Activated T-helper 1 cell treated with anti-CD3 and anti-CD28 coated beads, Interleukin-12 subunit alpha, Interleukin-12 subunit beta, Interleukin-2, Interleukin-4 antibody, amounts not matched to agents 30 ng/mL and 10 ng/mL and 1 ng/mL, durations not matched to agents 14 hours and 24 hours and 36 hours (primary cell): ENCODE measurements at regions of chr19 and their contacts with region 1.

Region 1: DNA sequence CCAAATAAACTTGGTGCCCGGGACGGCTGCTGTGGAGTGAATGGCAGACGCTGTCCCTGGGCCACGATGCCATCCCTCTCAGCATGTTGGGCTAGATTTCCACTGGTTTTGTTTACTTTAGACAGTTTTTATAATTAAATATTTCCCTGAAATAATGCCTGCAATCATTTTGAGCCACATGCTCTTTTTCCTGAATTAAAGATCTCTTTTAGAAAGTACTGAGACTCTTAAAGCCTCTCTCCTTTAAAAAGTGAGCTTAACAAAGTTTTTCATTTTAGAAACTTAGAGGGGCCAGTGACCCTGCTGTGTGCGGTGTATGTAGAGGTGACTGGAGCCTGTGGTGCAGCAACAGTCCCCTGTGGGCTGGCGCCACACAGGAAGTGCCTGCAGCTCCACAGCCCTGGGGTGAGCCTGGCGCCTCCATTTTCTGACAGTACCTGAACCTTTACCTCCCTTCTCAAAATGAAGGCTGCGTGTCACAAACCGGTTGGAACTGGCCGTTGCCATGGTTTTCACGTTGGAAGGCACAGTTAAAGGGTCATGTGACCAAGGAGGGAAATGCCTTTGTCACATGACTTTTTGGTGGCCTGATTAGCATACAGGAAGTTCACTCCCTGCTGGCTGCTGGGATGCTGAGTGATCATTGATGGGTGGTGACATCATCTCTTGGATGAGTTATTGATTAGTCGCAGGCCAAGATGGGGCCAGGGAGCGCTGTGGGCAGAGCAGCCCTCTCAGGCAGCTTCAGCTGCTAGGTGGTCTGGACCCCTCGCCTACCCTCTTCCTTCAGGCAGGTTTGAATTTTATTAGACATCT is 26.3 kb downstream of the TSSK6 start:
- DNase-seq: peak; percentile 91
- H3K4me3 Mint-ChIP-seq: peak overlapping the region; percentile 72
- H3K27ac Mint-ChIP-seq: peak overlapping the region; percentile 99
- H3K4me1 Mint-ChIP-seq: peaks cover 34% of the 10 kb centered on the region
- H3K27me3 Mint-ChIP-seq: no peaks in the 10 kb centered on the region

Region 2: GRCh38 chr19:19026299-19026971 is 462.6 kb before region 1 on chr19:
- intact Hi-C with region 1: no loop called
- DNase-seq: no peak
- H3K4me3 Mint-ChIP-seq: no peak overlapping the region
- H3K27ac Mint-ChIP-seq: no peak overlapping the region
- H3K4me1 Mint-ChIP-seq: peaks cover 35% of the 10 kb centered on the region
- H3K27me3 Mint-ChIP-seq: no peaks in the 10 kb centered on the region

Region 3: DNA sequence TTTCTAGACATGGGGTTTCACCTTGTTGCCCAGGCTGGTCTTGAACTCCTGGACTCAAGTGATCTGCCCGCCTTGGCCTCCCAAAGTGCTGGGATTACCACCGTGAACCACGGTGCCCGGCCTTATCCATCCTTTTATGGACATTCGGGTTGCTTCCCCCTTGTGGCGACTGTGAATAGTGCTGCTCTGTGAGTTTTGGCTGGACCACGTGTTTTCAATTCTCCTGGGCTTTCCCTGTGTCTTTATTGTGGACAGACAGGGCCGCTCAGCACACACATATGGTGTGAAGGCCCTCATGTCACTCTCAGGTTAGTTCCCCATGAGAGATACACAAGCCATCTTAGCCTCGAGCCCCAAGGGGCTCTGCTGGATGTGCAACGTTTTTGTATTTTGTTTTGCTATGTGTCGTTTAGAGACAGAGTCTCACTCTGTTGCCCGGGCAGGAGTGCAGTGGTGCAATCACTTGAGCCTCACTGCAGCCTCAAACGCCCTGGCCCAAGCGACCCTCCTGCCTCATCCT is 127.9 kb before region 1 on chr19:
- intact Hi-C with region 1: loop called (anchors 1 kb)
- DNase-seq: peak; percentile 65
- H3K4me3 Mint-ChIP-seq: no peak overlapping the region
- H3K27ac Mint-ChIP-seq: peak overlapping the region; percentile 52
- H3K4me1 Mint-ChIP-seq: peaks cover 30% of the 10 kb centered on the region
- H3K27me3 Mint-ChIP-seq: no peaks in the 10 kb centered on the region

Region 4: GRCh38 chr19:19385108-19385899 is 103.8 kb before region 1 on chr19:
- intact Hi-C with region 1: loop called (anchors 1 kb)
- DNase-seq: peak; percentile 100
- H3K4me3 Mint-ChIP-seq: peak overlapping the region; percentile 87
- H3K27ac Mint-ChIP-seq: peak overlapping the region; percentile 92
- H3K4me1 Mint-ChIP-seq: peaks cover 45% of the 10 kb centered on the region
- H3K27me3 Mint-ChIP-seq: peaks cover 2% of the 10 kb centered on the region

Region 5: DNA sequence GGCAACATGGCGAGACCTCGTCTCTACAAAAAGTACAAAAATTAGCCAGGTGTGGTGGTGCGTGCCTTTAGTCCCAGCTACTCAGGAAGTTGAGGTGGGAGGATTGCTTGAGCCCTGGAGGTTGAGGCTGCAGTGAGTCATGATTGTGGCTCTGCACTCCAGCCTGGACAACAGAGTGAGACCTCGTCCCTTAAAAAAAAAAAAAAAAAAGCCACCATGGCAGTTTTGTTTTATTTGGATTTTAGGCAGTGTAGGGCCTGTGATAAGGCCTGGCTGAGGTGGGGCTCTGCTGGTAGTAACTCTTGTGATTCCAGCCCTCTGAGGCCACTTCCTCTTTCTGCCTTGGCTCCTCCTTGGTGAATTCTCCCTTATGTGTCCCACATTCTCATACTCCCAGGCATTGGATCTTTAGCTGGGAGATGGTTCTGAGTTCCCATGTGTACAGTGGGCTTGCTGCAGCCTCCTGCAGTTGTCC is 44.4 kb before region 1 on chr19:
- intact Hi-C with region 1: loop called (anchors 1 kb)
- DNase-seq: no peak
- H3K4me3 Mint-ChIP-seq: peak overlapping the region; percentile 28
- H3K27ac Mint-ChIP-seq: peak overlapping the region; percentile 73
- H3K4me1 Mint-ChIP-seq: peaks cover 60% of the 10 kb centered on the region
- H3K27me3 Mint-ChIP-seq: no peaks in the 10 kb centered on the region